K562 (cell line): ENCODE measurements at regions of chr17 and their contacts with region 1.

Region 1: GRCh38 chr17:74493381-74493833 is 27.0 kb downstream of the CD300A start:
- DNase-seq: peak; percentile 63 to 73 (median 66)
- ATAC-seq: peak; percentile 92
- H3K4me3 ChIP-seq: no peak overlapping the region
- H3K27ac ChIP-seq: no peak overlapping the region
- H3K4me1 ChIP-seq: no peaks in the 10 kb centered on the region
- H3K27me3 ChIP-seq: peaks cover 0 to 20% of the 10 kb centered on the region in 2 experiments; a peak in 2 of 5 replicates
- CTCF ChIP-seq: peak; percentile 84 to 92 (median 90)
- EP300 ChIP-seq: no peak
- POLR2A ChIP-seq: no peak
- RAD21 ChIP-seq: peak; percentile 96 to 98

Region 2: GRCh38 chr17:74368092-74369081 is 125.0 kb before region 1 on chr17:
- CTCF ChIA-PET with region 1: interaction called, 14 read pairs
- POLR2A ChIA-PET with region 1: interaction called, 5 read pairs
- in situ Hi-C with region 1: no loop called
- intact Hi-C with region 1: loop called (anchors 5 kb)
- DNase-seq: peak; percentile 79 to 88 (median 88)
- ATAC-seq: peak; percentile 91
- H3K4me3 ChIP-seq: no peak overlapping the region
- H3K27ac ChIP-seq: no peak overlapping the region
- H3K4me1 ChIP-seq: peaks cover 0 to 22% of the 10 kb centered on the region in 2 experiments; a peak in 1 of 5 replicates
- H3K27me3 ChIP-seq: peaks cover 24 to 50% of the 10 kb centered on the region in 2 experiments
- CTCF ChIP-seq: peak; percentile 88 to 92 (median 90)
- EP300 ChIP-seq: no peak
- POLR2A ChIP-seq: no peak
- RAD21 ChIP-seq: peak; percentile 83 to 92

Region 3: GRCh38 chr17:74379495-74380085 is 113.8 kb before region 1 on chr17:
- CTCF ChIA-PET with region 1: interaction called, 37 read pairs
- POLR2A ChIA-PET with region 1: no interaction called
- in situ Hi-C with region 1: loop called (anchors 5 kb)
- intact Hi-C with region 1: loop called (anchors 2 kb)
- DNase-seq: peak; percentile 89 to 92 (median 90)
- ATAC-seq: peak; percentile 99
- H3K4me3 ChIP-seq: no peak overlapping the region
- H3K27ac ChIP-seq: no peak overlapping the region
- H3K4me1 ChIP-seq: peaks cover 0 to 10% of the 10 kb centered on the region in 2 experiments; a peak in 4 of 5 replicates
- H3K27me3 ChIP-seq: peaks cover 19 to 53% of the 10 kb centered on the region in 2 experiments
- CTCF ChIP-seq: peak; percentile 91 to 95 (median 95)
- EP300 ChIP-seq: no peak
- POLR2A ChIP-seq: no peak
- RAD21 ChIP-seq: peak; percentile 98 to 99

Region 4: GRCh38 chr17:74437702-74438101 is 55.7 kb before region 1 on chr17:
- CTCF ChIA-PET with region 1: interaction called, 9 read pairs
- POLR2A ChIA-PET with region 1: no interaction called
- in situ Hi-C with region 1: no loop called
- intact Hi-C with region 1: loop called (anchors 1 kb)
- DNase-seq: peak; percentile 38 to 63 (median 61)
- ATAC-seq: peak; percentile 64; the same call in 2 of the 3 replicates
- H3K4me3 ChIP-seq: no peak overlapping the region
- H3K27ac ChIP-seq: no peak overlapping the region
- H3K4me1 ChIP-seq: peaks cover 0 to 10% of the 10 kb centered on the region in 2 experiments; a peak in 3 of 5 replicates
- H3K27me3 ChIP-seq: peaks cover 0 to 17% of the 10 kb centered on the region in 2 experiments; a peak in 2 of 5 replicates
- CTCF ChIP-seq: peak; percentile 79 to 88 (median 87)
- EP300 ChIP-seq: no peak
- POLR2A ChIP-seq: no peak
- RAD21 ChIP-seq: peak; percentile 39 to 76; a peak in 3 of 4 replicates